Activated CD8-positive, alpha-beta T cell treated with anti-CD3 and anti-CD28 coated beads, Interleukin-2, amount 10 ng/mL, durations not matched to agents 7 days and 5 days (primary cell): ENCODE measurements at regions of chr9 and their contacts with region 1.

Region 1: GRCh38 chr9:127734747-127735529 is at the start of gene TOR2A:
- DNase-seq: peak; percentile 99
- ATAC-seq: peak; percentile 93
- H3K4me3 Mint-ChIP-seq: peak within 1 kb of the TSS; percentile 73
- H3K27ac Mint-ChIP-seq: peak within 1 kb of the TSS; percentile 86
- H3K4me1 Mint-ChIP-seq: peaks cover 25% of the 10 kb centered on the region
- H3K27me3 Mint-ChIP-seq: no peaks in the 10 kb centered on the region
- total RNA-seq, gene TOR2A: 27.0 to 29.1 TPM

Region 2: GRCh38 chr9:127525401-127526187 is 209.3 kb before region 1 on chr9:
- CTCF ChIA-PET with region 1: interaction called, 25 read pairs
- POLR2A ChIA-PET with region 1: no interaction called
- DNase-seq: peak; percentile 59
- ATAC-seq: peak; percentile 50
- H3K4me3 Mint-ChIP-seq: no peak overlapping the region
- H3K27ac Mint-ChIP-seq: no peak overlapping the region
- H3K4me1 Mint-ChIP-seq: peaks cover 18% of the 10 kb centered on the region
- H3K27me3 Mint-ChIP-seq: no peaks in the 10 kb centered on the region

Region 3: DNA sequence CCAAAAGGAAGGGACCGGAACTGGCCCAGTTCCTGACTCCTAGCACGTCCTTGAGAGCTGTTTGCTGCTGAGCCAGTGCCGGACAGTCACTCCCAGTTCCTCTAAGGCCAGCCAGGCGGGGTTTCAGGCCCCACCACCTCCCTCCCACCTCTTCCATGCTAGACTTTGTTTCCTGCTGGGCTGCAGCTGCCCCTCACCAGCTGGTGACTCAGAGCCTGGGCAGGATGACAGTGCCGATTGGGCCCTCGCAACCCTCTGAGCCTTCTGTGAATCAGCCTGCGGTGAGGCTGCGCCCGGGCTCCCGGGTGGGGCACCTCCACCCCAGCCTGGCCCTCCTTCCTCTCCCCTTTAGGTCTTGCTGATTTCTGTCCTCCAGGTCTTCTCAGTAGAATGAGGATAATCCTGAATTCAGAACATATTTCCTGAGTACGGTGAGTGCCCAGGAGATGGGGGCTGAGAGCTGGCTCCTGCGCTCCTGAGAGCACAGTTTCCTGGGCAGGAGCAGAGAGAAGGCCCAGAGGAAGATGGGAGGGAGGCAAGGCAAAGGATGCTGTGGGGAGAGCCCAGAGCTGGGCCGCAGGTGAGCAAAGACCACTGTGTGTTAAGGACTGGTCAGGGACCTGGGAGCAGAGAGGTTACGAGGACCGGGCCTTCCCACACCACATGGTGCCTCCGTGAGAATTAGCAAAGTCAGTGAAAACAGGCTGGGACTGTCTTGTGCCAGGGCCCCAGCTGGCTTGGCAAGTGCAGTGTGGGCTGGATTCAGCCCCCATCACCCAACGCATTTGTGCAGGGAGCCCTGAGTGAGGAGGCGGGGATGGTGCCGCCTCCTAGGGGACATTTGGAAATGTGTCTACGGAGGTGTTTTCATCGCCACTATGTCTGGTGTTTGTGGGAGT is 155.7 kb before region 1 on chr9:
- CTCF ChIA-PET with region 1: interaction called, 13 read pairs
- POLR2A ChIA-PET with region 1: no interaction called
- DNase-seq: peak; percentile 88
- ATAC-seq: peak; percentile 99
- H3K4me3 Mint-ChIP-seq: peak overlapping the region; percentile 82
- H3K27ac Mint-ChIP-seq: peak overlapping the region; percentile 93
- H3K4me1 Mint-ChIP-seq: peaks cover 58% of the 10 kb centered on the region
- H3K27me3 Mint-ChIP-seq: no peaks in the 10 kb centered on the region

Region 4: DNA sequence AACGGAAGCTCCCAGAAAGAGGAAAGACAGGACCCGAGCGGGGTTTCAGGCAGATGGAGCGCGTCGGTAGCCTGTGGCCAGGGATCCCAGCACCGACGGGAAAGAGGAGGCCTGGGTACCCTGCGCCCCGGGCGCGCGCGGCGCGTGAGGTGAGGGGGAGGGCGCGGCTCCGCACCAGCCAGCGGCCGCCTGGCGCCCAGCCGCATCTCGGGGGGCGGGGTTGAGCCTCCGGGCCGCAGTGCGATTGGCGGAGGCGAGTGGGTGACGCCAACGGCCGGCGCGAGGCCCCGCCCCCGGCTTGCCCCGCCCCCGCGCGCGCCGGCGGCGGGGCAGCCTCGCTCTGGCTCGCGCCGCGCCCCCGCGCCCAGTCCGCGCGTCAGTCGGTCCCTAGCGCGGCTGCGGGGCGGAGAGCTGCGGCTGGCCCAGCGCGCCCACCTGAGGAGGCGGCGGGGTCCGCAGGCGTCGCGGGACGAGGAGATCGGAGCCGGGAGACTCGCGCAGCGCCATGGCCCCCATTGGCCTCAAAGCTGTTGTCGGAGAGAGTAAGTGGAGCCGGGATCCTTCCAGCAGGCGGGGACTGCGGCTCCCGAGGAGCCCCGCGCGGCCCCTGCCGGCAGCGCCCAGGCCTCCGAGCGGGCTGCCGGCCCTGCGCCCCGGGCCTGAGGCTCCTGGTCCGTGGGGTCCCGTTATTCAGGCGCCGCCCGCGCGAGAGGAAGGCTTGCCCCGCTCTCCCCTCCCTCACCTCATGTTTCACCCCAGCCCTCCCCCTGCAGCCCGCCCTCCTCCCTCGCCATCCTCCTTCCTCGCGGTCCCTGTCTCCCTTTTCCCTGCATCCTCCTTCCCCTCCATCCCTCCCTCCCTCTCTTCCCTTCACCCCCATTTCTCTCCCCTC is 122.8 kb before region 1 on chr9 and contains the start of gene STXBP1:
- CTCF ChIA-PET with region 1: interaction called, 24 read pairs
- POLR2A ChIA-PET with region 1: interaction called, 4 read pairs
- DNase-seq: peak; percentile 89
- ATAC-seq: peak; percentile 82
- H3K4me3 Mint-ChIP-seq: peak within 1 kb of the TSS; percentile 84
- H3K27ac Mint-ChIP-seq: peak within 1 kb of the TSS; percentile 64
- H3K4me1 Mint-ChIP-seq: peaks cover 35% of the 10 kb centered on the region
- H3K27me3 Mint-ChIP-seq: peaks cover 34% of the 10 kb centered on the region
- total RNA-seq, gene STXBP1: 24.2 to 25.3 TPM

Region 5: DNA sequence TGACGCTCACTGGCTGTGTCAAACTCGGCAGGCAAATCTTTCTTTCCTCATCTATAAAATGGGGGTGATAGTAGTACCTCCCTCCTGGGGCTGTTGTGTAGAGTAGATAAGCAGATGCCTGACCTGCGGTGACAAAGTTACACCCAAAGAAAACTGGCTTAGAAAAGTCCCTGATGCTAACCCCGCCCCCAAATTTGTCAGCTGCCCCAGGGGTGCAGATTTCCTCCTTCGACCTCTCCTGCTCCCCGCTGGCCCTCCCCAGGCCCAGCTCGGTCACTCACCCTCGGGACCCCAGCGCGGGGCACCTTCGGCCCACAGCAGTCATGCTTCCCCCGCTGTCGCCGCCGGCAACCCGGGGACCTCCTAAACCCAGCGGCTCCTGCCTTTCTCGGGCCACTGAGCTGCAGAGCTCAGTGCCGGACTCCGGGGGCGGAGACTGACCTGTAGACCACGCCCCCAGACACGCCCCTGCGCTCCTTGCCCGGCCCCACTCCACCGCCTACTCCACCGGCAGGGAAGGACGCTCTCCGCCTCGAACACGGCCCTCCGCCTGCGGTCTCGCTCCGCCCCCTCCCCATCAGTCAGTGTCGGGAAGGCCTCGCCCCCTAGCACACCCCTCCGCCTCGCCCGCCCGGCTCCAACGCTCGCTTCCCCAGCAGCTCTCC is 36.1 kb after region 1 on chr9:
- CTCF ChIA-PET with region 1: interaction called, 34 read pairs
- POLR2A ChIA-PET with region 1: interaction called, 7 read pairs
- DNase-seq: peak; percentile 98
- ATAC-seq: peak; percentile 92
- H3K4me3 Mint-ChIP-seq: peak overlapping the region; percentile 89
- H3K27ac Mint-ChIP-seq: peak overlapping the region; percentile 85
- H3K4me1 Mint-ChIP-seq: peaks cover 86% of the 10 kb centered on the region
- H3K27me3 Mint-ChIP-seq: no peaks in the 10 kb centered on the region

Region 6: GRCh38 chr9:127862075-127863011 is 127.4 kb after region 1 on chr9:
- CTCF ChIA-PET with region 1: interaction called, 13 read pairs
- POLR2A ChIA-PET with region 1: interaction called, 4 read pairs
- DNase-seq: peak; percentile 78
- ATAC-seq: peak; percentile 71
- H3K4me3 Mint-ChIP-seq: peak overlapping the region; percentile 20
- H3K27ac Mint-ChIP-seq: peak overlapping the region; percentile 93
- H3K4me1 Mint-ChIP-seq: peaks cover 52% of the 10 kb centered on the region
- H3K27me3 Mint-ChIP-seq: no peaks in the 10 kb centered on the region

Region 7: GRCh38 chr9:127924743-127925444 is 190.0 kb after region 1 on chr9:
- CTCF ChIA-PET with region 1: interaction called, 30 read pairs
- POLR2A ChIA-PET with region 1: interaction called, 4 read pairs
- DNase-seq: no peak
- ATAC-seq: no peak
- H3K4me3 Mint-ChIP-seq: no peak overlapping the region
- H3K27ac Mint-ChIP-seq: no peak overlapping the region
- H3K4me1 Mint-ChIP-seq: peaks cover 52% of the 10 kb centered on the region
- H3K27me3 Mint-ChIP-seq: peaks cover 17% of the 10 kb centered on the region